CD4-positive, alpha-beta memory T cell (primary cell): ENCODE measurements at regions of chrX and their contacts with region 1.

Region 1: DNA sequence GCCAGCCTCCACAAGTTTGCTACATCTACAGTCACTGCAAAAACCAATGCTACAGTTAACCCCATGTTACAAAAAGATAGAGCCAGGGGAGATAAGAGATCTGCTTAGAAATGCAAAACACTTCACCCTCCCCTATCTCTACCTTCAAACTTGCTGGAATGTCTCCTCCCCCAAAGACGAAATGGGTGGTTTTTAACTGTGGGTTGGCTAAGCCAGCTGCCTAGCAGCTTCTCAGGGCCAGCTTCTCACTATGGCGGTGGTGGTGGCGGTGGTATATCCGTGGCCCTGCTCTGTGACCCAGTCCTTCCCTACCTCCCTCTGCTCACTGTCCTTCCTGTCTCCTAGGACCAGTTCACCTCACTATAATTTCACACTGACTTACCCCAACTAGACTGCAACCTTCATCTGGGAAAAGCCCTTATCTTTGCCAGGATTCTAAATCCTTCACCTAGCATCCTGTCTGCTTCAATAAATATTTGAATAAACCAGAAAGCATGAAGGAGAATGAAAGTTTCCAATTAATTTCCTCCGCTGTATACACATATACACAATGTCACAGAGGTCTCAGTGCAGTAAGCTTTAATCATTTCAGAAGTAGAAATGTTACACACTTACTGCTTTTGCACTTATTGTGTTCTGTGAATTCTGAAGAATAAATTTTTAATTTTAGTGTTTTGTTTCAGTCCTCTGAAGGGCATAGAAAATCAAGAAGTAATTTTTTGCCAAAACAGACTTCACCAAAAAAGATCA is 46.3 kb downstream of the SH3KBP1 start:
- DNase-seq: peak; percentile 45 to 75 (median 51)
- H3K4me3 ChIP-seq: no peak overlapping the region
- H3K4me3 Mint-ChIP-seq: peak overlapping the region; percentile 1 to 78 (median 72)
- H3K27ac ChIP-seq: peak overlapping the region; percentile 36
- H3K27ac Mint-ChIP-seq: peak overlapping the region; percentile 58 to 93 (median 88)
- H3K4me1 ChIP-seq: peaks cover 54% of the 10 kb centered on the region
- H3K4me1 Mint-ChIP-seq: peaks cover 44 to 76% (median 53%) of the 10 kb centered on the region in 4 donors
- H3K27me3 ChIP-seq: no peaks in the 10 kb centered on the region
- H3K27me3 Mint-ChIP-seq: no peaks in the 10 kb centered on the region

Region 2: DNA sequence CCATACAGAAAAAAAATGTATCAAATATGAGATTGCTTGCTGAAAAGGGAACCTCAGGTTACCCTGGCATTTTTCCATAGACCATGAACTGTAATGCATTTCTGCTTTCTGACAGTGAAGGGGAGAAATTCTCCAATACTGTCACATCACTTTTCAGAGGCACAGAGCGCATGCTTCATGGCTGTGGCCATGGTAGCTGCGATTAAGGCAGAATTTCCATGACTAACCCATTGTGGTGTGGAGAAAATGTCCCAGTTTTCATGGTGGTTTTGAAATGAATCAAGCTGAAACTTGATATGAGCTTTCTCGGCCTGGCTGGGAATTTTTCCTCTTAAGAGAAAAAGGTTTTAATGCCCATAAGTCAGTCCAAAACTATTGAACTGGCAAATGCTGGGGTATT is 286.3 kb before region 1 on chrX:
- CTCF ChIA-PET with region 1: no interaction called
- POLR2A ChIA-PET with region 1: no interaction called
- intact Hi-C with region 1: no loop called
- DNase-seq: peak in 1 of 5 donors; percentile 33
- H3K4me3 ChIP-seq: no peak overlapping the region
- H3K4me3 Mint-ChIP-seq: no peak overlapping the region
- H3K27ac ChIP-seq: no peak overlapping the region
- H3K27ac Mint-ChIP-seq: peak overlapping the region in 2 of 7 donors; percentile 8 to 80
- H3K4me1 ChIP-seq: peaks cover 13% of the 10 kb centered on the region
- H3K4me1 Mint-ChIP-seq: peaks cover 16 to 41% (median 23%) of the 10 kb centered on the region in 4 donors
- H3K27me3 ChIP-seq: no peaks in the 10 kb centered on the region
- H3K27me3 Mint-ChIP-seq: no peaks in the 10 kb centered on the region

Region 3: DNA sequence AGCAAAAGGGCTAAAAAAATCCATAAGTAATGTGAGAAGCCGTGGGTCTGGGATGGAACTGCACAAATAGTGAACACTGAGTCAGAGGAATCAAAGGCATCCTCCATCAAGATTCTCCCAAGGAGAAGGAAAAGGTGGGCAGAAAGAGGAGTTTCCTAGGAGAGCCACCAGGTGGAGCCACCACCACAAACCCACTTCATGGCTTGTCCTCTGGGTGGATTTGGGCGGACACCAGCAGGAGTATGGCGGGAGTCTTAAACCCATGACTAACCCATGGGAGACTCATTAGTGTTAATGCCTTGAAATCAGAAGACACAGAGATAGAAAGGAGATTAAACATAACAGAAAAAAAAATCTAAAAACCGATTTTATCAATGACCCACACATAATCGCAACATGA is 101.4 kb before region 1 on chrX:
- CTCF ChIA-PET with region 1: interaction called, 6 read pairs
- POLR2A ChIA-PET with region 1: interaction called, 13 read pairs
- intact Hi-C with region 1: no loop called
- DNase-seq: peak; percentile 39 to 47 (median 42)
- H3K4me3 ChIP-seq: no peak overlapping the region
- H3K4me3 Mint-ChIP-seq: peak overlapping the region in 4 of 8 donors; percentile 39 to 85 (median 62)
- H3K27ac ChIP-seq: peak overlapping the region; percentile 21
- H3K27ac Mint-ChIP-seq: peak overlapping the region; percentile 71 to 98 (median 86)
- H3K4me1 ChIP-seq: peaks cover 90% of the 10 kb centered on the region
- H3K4me1 Mint-ChIP-seq: peaks cover 47 to 84% (median 68%) of the 10 kb centered on the region in 4 donors
- H3K27me3 ChIP-seq: no peaks in the 10 kb centered on the region
- H3K27me3 Mint-ChIP-seq: no peaks in the 10 kb centered on the region

Region 4: GRCh38 chrX:19772826-19773628 is 68.0 kb before region 1 on chrX:
- CTCF ChIA-PET with region 1: no interaction called
- POLR2A ChIA-PET with region 1: interaction called, 10 read pairs
- intact Hi-C with region 1: no loop called
- DNase-seq: peak in 1 of 5 donors; percentile 51
- H3K4me3 ChIP-seq: no peak overlapping the region
- H3K4me3 Mint-ChIP-seq: peak overlapping the region in 7 of 8 donors; percentile 60 to 86 (median 72)
- H3K27ac ChIP-seq: peak overlapping the region; percentile 58
- H3K27ac Mint-ChIP-seq: peak overlapping the region; percentile 84 to 97 (median 90)
- H3K4me1 ChIP-seq: peaks cover 87% of the 10 kb centered on the region
- H3K4me1 Mint-ChIP-seq: peaks cover 45 to 80% (median 59%) of the 10 kb centered on the region in 4 donors
- H3K27me3 ChIP-seq: no peaks in the 10 kb centered on the region
- H3K27me3 Mint-ChIP-seq: no peaks in the 10 kb centered on the region

Region 5: DNA sequence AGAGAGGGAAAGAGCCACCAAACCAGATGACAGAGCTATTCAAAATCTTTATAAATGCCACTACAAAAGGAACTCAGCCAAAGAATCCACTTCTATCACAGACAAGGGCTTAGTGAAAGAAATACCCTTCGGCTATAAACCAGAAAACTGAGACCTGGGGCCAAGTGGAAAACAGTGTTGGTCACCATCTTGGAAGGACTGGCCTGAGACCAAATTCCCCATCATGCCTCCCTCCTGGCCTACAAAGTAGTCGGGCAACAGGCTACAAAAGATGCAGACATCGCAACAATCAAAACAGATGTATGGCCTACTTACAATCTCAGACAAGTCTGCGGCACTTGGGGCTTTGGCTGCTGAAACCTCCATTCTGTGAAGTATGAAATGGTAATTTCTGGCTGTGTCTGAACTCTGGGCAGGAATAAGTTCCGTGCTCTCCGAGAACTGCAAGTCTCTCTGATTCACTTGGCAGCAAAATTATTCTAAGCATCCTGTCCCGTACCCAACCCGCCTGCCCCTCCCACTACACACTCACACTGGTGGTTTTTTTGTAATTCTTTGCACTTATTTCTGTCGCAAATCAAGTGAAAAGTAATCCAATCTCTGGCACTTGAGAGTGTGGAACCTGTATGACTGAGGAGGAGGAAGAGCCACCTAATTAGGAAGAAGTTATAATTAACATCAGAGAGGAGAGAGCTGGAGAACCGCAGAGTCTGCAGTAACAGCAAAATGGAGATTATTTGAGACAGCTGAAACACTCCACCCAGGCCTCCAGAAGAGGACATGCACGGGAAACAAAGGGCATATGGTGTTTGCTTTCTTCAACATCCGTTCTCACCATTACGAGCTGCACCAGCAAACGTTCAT is 41.5 kb before region 1 on chrX:
- CTCF ChIA-PET with region 1: interaction called, 4 read pairs
- POLR2A ChIA-PET with region 1: interaction called, 41 read pairs
- intact Hi-C with region 1: loop called (anchors 2 kb)
- DNase-seq: peak; percentile 64 to 76 (median 72)
- H3K4me3 ChIP-seq: peak overlapping the region; percentile 55 to 68
- H3K4me3 Mint-ChIP-seq: peak overlapping the region; percentile 90 to 96 (median 93)
- H3K27ac ChIP-seq: peak overlapping the region; percentile 68
- H3K27ac Mint-ChIP-seq: peak overlapping the region; percentile 88 to 98 (median 95)
- H3K4me1 ChIP-seq: peaks cover 67% of the 10 kb centered on the region
- H3K4me1 Mint-ChIP-seq: peaks cover 38 to 81% (median 51%) of the 10 kb centered on the region in 4 donors
- H3K27me3 ChIP-seq: no peaks in the 10 kb centered on the region
- H3K27me3 Mint-ChIP-seq: no peaks in the 10 kb centered on the region

Region 6: DNA sequence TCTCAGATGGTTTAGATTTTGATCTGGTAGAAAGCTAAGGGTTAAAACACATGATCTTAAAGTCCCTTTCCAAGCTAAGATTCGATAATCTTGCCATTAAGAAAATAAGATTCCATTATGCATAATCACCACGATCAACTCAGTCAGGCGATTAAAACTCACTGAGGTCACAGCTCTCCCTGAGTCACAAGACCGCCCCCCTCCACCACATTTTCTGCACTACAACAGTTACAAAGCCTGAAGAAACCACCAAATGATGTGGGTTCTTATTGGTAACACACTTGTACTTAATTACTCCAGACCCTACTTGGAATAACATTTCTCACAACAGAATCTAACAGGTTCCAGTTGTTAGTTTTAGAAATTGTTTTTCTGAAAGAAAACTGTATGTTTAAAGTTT is 16.5 kb before region 1 on chrX:
- CTCF ChIA-PET with region 1: interaction called, 4 read pairs
- POLR2A ChIA-PET with region 1: interaction called, 18 read pairs
- intact Hi-C with region 1: loop called (anchors 2 kb)
- DNase-seq: peak in 1 of 5 donors; percentile 35
- H3K4me3 ChIP-seq: no peak overlapping the region
- H3K4me3 Mint-ChIP-seq: no peak overlapping the region
- H3K27ac ChIP-seq: no peak overlapping the region
- H3K27ac Mint-ChIP-seq: peak overlapping the region in 1 of 7 donors; percentile 47
- H3K4me1 ChIP-seq: peaks cover 38% of the 10 kb centered on the region
- H3K4me1 Mint-ChIP-seq: peaks cover 12 to 46% (median 22%) of the 10 kb centered on the region in 4 donors
- H3K27me3 ChIP-seq: no peaks in the 10 kb centered on the region
- H3K27me3 Mint-ChIP-seq: no peaks in the 10 kb centered on the region

Region 7: DNA sequence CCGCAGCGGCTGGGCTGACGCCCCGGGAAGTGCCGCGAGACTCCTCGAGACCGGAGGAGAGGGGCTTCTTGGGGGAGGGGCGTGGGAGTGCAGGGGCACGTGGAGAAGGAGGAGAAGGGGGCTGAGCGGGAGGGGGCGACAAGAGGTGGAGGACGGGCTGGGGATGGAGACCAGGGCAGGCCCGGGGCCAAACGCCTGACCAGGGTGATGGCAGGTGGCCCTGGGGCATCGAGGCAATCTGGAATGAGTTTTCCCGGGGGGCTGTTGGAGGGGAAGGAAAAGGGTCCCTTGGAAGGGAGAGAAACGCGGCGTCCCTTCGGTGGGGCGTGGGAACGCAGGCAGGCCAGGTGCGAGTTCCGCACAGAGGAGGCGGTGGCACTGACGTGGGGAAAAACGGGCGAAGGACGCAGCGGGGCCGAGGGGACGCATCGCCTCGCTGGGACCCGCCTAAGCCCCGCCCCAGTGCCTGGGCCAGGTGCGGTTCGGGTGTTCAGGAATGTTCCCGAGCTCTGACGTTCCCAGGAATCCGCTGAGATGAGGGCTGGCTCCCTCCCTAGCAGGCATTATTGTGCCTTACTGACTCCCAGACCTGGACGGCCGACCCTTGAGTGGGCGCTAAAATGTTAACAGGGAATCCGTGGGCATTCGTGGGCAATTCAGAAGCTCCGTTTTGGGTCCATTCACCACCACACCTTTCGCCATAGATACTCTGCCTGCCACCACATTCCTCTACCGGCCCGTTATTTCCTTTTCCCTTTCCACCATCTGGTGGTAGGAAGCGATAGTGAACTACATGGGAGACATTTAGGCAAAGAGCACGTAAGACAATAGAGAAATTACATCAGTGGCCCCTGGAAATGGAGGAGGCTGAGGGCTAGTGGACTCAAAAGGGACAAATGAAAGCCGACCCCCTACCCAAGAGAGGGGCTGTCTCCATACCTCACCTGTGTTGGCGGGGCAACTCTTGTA is 47.1 kb after region 1 on chrX:
- CTCF ChIA-PET with region 1: no interaction called
- POLR2A ChIA-PET with region 1: interaction called, 14 read pairs
- intact Hi-C with region 1: loop called (anchors 2 kb)
- DNase-seq: peak; percentile 54 to 63 (median 58)
- H3K4me3 ChIP-seq: peak overlapping the region; percentile 23 to 51
- H3K4me3 Mint-ChIP-seq: peak overlapping the region; percentile 72 to 86 (median 80)
- H3K27ac ChIP-seq: peak overlapping the region; percentile 59
- H3K27ac Mint-ChIP-seq: peak overlapping the region; percentile 77 to 96 (median 89)
- H3K4me1 ChIP-seq: peaks cover 36% of the 10 kb centered on the region
- H3K4me1 Mint-ChIP-seq: peaks cover 24 to 50% (median 35%) of the 10 kb centered on the region in 4 donors
- H3K27me3 ChIP-seq: no peaks in the 10 kb centered on the region
- H3K27me3 Mint-ChIP-seq: no peaks in the 10 kb centered on the region